Activated CD8-positive, alpha-beta T cell treated with anti-CD3 and anti-CD28 coated beads for 36 hours (primary cell): ENCODE measurements at regions of chr10 and their contacts with region 1.

Region 1: DNA sequence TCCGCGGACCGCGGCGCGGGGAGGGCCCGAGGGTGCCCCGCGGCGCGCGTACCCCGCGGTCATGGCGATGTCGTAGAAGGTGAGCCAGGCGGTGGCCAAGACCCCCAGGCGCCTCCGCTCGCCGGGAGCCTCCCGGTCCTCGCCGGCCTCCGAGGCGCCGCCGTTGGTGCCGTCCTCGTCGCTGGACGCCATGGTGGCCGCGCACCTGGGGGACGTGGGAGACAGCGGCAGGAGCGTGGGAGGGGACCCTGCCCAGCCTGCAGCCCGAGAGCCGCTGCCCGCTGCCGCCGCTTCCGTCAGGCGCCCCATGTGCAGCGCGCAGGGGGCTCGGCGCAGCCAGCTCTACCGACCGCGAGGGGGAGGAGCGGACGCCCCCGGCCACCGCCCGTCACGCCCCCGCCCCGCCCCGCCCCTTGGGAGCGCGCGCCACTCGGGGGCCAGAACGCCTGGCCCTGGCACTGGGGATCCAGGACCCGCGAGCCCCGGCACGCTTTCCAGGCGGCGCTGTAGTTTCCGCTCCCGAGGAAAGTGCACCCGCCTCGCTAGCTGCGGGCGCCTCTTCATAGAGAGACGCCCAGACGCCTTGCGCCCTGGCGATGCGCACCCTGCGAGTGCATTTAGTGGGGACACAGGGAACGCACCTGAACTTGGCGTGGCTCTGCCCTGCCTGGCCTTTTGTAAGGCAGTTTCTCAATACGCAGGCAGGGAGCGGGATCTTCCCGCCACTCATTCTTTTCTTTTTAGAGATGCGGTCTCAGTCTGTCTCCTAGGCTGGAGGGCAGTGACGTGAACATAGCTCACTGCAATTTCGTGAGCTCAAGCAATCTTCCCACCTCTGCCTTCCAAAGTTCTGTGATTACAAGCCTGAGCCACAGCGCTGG is at the start of gene HACD1:
- DNase-seq: peak; percentile 69
- ATAC-seq: peak; percentile 81
- H3K4me3 Mint-ChIP-seq: peak within 1 kb of the TSS; percentile 79
- H3K27ac Mint-ChIP-seq: peak within 1 kb of the TSS; percentile 25
- H3K4me1 Mint-ChIP-seq: peaks cover 4% of the 10 kb centered on the region
- H3K27me3 Mint-ChIP-seq: peaks cover 12% of the 10 kb centered on the region
- CTCF ChIP-seq: peak; percentile 25
- total RNA-seq, gene HACD1: 2.6 to 2.8 TPM

Region 2: GRCh38 chr10:17533731-17534130 is 83.5 kb before region 1 on chr10:
- CTCF ChIA-PET with region 1: no interaction called
- POLR2A ChIA-PET with region 1: no interaction called
- intact Hi-C with region 1: no loop called
- DNase-seq: no peak
- ATAC-seq: no peak
- H3K4me3 Mint-ChIP-seq: no peak overlapping the region
- H3K27ac Mint-ChIP-seq: no peak overlapping the region
- H3K4me1 Mint-ChIP-seq: no peaks in the 10 kb centered on the region
- H3K27me3 Mint-ChIP-seq: peaks cover 1% of the 10 kb centered on the region
- CTCF ChIP-seq: no peak

Region 3: DNA sequence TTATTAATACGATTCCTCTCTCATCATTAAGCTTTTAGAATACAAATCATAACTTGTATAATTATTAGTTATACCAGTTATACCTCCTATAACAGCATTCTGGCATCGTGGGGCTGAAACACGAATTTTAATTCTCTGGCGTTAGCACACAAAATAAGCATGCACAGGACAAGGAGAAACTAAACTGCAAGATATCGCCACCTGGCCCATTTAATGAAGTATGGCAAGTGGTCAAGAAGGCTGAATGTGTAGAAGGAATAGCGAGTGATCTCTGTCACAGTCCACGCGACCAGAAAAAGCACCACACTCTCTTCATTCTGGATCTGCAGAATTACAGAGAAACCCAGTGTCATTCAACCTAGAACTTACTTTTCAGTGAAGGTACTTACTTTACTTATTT is 18.2 kb before region 1 on chr10:
- CTCF ChIA-PET with region 1: no interaction called
- POLR2A ChIA-PET with region 1: no interaction called
- intact Hi-C with region 1: no loop called
- DNase-seq: no peak
- ATAC-seq: no peak
- H3K4me3 Mint-ChIP-seq: no peak overlapping the region
- H3K27ac Mint-ChIP-seq: no peak overlapping the region
- H3K4me1 Mint-ChIP-seq: no peaks in the 10 kb centered on the region
- H3K27me3 Mint-ChIP-seq: no peaks in the 10 kb centered on the region
- CTCF ChIP-seq: peak; percentile 15

Region 4: GRCh38 chr10:17737027-17737965 is 120.0 kb after region 1 on chr10:
- CTCF ChIA-PET with region 1: interaction called, 13 read pairs
- POLR2A ChIA-PET with region 1: interaction called, 3 read pairs
- intact Hi-C with region 1: no loop called
- DNase-seq: no peak
- ATAC-seq: no peak
- H3K4me3 Mint-ChIP-seq: no peak overlapping the region
- H3K27ac Mint-ChIP-seq: no peak overlapping the region
- H3K4me1 Mint-ChIP-seq: peaks cover 2% of the 10 kb centered on the region
- H3K27me3 Mint-ChIP-seq: no peaks in the 10 kb centered on the region
- CTCF ChIP-seq: peak; percentile 84